AG04450 (cell line): ENCODE measurements at regions of chr4 and their contacts with region 1.

Region 1: GRCh38 chr4:47933840-47934239 is 19.5 kb upstream of the NFXL1 start:
- DNase-seq: peak; percentile 23
- H3K4me3 ChIP-seq: no peak overlapping the region
- H3K27ac ChIP-seq: no peak overlapping the region
- H3K27me3 ChIP-seq: peaks cover 6% of the 10 kb centered on the region
- CTCF ChIP-seq: peak; percentile 65

Region 2: DNA sequence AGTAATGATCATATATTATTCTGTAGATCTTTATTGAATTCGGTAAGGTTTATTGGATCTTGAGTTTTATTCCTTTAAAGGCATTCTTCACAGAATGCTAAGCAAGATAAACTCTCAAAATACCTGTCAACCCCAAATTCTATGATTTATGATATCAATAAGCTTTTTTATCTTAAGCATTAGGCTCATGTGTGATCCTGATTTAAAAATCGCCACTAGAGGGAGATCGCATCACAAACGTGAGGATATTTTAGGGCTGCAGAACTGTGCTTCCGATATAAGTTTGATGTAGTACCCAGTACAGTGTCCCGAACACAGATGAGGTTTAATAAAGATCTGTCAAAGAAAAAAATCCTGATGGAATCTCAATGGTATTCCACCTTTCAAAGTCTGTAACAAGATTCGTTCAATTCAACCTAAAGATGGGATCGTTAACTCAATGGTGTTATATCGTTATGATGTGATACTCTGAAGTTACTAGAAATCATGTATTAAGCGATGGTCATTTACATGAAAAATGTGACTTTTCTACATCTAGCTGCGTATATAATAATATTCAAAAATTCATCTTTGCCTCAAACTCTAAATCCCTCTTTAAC is 264.9 kb before region 1 on chr4:
- CTCF ChIA-PET with region 1: interaction called, 66 read pairs
- POLR2A ChIA-PET with region 1: no interaction called
- DNase-seq: peak; percentile 16
- H3K4me3 ChIP-seq: no peak overlapping the region
- H3K27ac ChIP-seq: no peak overlapping the region
- H3K27me3 ChIP-seq: no peaks in the 10 kb centered on the region
- CTCF ChIP-seq: peak; percentile 79

Region 3: GRCh38 chr4:47686294-47686872 is 247.5 kb before region 1 on chr4:
- CTCF ChIA-PET with region 1: interaction called, 24 read pairs
- POLR2A ChIA-PET with region 1: no interaction called
- DNase-seq: no peak
- H3K4me3 ChIP-seq: no peak overlapping the region
- H3K27ac ChIP-seq: no peak overlapping the region
- H3K27me3 ChIP-seq: no peaks in the 10 kb centered on the region
- CTCF ChIP-seq: peak; percentile 78

Region 4: GRCh38 chr4:47704693-47705325 is 229.0 kb before region 1 on chr4:
- CTCF ChIA-PET with region 1: interaction called, 34 read pairs
- POLR2A ChIA-PET with region 1: no interaction called
- DNase-seq: peak; percentile 7
- H3K4me3 ChIP-seq: no peak overlapping the region
- H3K27ac ChIP-seq: no peak overlapping the region
- H3K27me3 ChIP-seq: peaks cover 3% of the 10 kb centered on the region
- CTCF ChIP-seq: peak; percentile 47

Region 5: GRCh38 chr4:48058284-48058962 is 124.6 kb after region 1 on chr4:
- CTCF ChIA-PET with region 1: no interaction called
- POLR2A ChIA-PET with region 1: no interaction called
- DNase-seq: no peak
- H3K4me3 ChIP-seq: no peak overlapping the region
- H3K27ac ChIP-seq: no peak overlapping the region
- H3K27me3 ChIP-seq: no peaks in the 10 kb centered on the region
- CTCF ChIP-seq: no peak

Region 6: GRCh38 chr4:48275247-48275646 is 341.4 kb after region 1 on chr4:
- CTCF ChIA-PET with region 1: no interaction called
- POLR2A ChIA-PET with region 1: no interaction called
- DNase-seq: no peak
- H3K4me3 ChIP-seq: no peak overlapping the region
- H3K27ac ChIP-seq: no peak overlapping the region
- H3K27me3 ChIP-seq: peaks cover 5% of the 10 kb centered on the region
- CTCF ChIP-seq: peak; percentile 52